SK-N-SH (cell line): ENCODE measurements at regions of chr12 and their contacts with region 1.

Region 1: GRCh38 chr12:26701604-26702215 is 131.3 kb downstream of the ITPR2 start:
- DNase-seq: peak; percentile 19
- H3K4me3 ChIP-seq: no peak overlapping the region; a peak in 1 of 4 replicates
- H3K27ac ChIP-seq: no peak overlapping the region
- H3K4me1 ChIP-seq: peaks cover 8 to 20% of the 10 kb centered on the region in 2 experiments; a peak in 3 of 4 replicates
- H3K27me3 ChIP-seq: no peaks in the 10 kb centered on the region
- CTCF ChIP-seq: peak; percentile 82
- EP300 ChIP-seq: no peak
- RAD21 ChIP-seq: peak; percentile 75

Region 2: GRCh38 chr12:26097046-26097878 is 604.4 kb before region 1 on chr12:
- CTCF ChIA-PET with region 1: interaction called, 10 read pairs
- POLR2A ChIA-PET with region 1: no interaction called
- DNase-seq: peak; percentile 75
- H3K4me3 ChIP-seq: peak overlapping the region in 1 of 2 experiments; percentile 20; a peak in 1 of 4 replicates
- H3K27ac ChIP-seq: no peak overlapping the region
- H3K4me1 ChIP-seq: no peaks in the 10 kb centered on the region; a peak in 1 of 4 replicates
- H3K27me3 ChIP-seq: no peaks in the 10 kb centered on the region
- CTCF ChIP-seq: peak; percentile 98
- EP300 ChIP-seq: no peak
- RAD21 ChIP-seq: peak; percentile 88

Region 3: GRCh38 chr12:26119391-26119981 is 582.2 kb before region 1 on chr12:
- CTCF ChIA-PET with region 1: interaction called, 24 read pairs
- POLR2A ChIA-PET with region 1: no interaction called
- DNase-seq: peak; percentile 56
- H3K4me3 ChIP-seq: no peak overlapping the region
- H3K27ac ChIP-seq: peak overlapping the region in 1 of 2 experiments; percentile 4; a peak in 1 of 4 replicates
- H3K4me1 ChIP-seq: peaks cover 4 to 15% of the 10 kb centered on the region in 2 experiments; a peak in 3 of 4 replicates
- H3K27me3 ChIP-seq: no peaks in the 10 kb centered on the region
- CTCF ChIP-seq: peak; percentile 76
- EP300 ChIP-seq: no peak
- RAD21 ChIP-seq: peak; percentile 80

Region 4: GRCh38 chr12:26126340-26127284 is 575.1 kb before region 1 on chr12:
- CTCF ChIA-PET with region 1: interaction called, 22 read pairs
- POLR2A ChIA-PET with region 1: no interaction called
- DNase-seq: peak; percentile 90
- H3K4me3 ChIP-seq: peak overlapping the region; percentile 65 to 83
- H3K27ac ChIP-seq: peak overlapping the region; percentile 69 to 96
- H3K4me1 ChIP-seq: peaks cover 5 to 21% of the 10 kb centered on the region in 2 experiments; a peak in 3 of 4 replicates
- H3K27me3 ChIP-seq: no peaks in the 10 kb centered on the region
- CTCF ChIP-seq: peak; percentile 22; the same call in 1 of the 2 replicates
- EP300 ChIP-seq: no peak
- RAD21 ChIP-seq: peak; percentile 33; the same call in 1 of the 2 replicates

Region 5: GRCh38 chr12:26195641-26196420 is 505.9 kb before region 1 on chr12:
- CTCF ChIA-PET with region 1: interaction called, 10 read pairs
- POLR2A ChIA-PET with region 1: no interaction called
- DNase-seq: peak; percentile 78
- H3K4me3 ChIP-seq: peak overlapping the region; percentile 56 to 57
- H3K27ac ChIP-seq: peak overlapping the region; percentile 66 to 73
- H3K4me1 ChIP-seq: peaks cover 9 to 25% of the 10 kb centered on the region in 2 experiments; a peak in 3 of 4 replicates
- H3K27me3 ChIP-seq: no peaks in the 10 kb centered on the region
- CTCF ChIP-seq: no peak
- EP300 ChIP-seq: no peak
- RAD21 ChIP-seq: no peak

Region 6: DNA sequence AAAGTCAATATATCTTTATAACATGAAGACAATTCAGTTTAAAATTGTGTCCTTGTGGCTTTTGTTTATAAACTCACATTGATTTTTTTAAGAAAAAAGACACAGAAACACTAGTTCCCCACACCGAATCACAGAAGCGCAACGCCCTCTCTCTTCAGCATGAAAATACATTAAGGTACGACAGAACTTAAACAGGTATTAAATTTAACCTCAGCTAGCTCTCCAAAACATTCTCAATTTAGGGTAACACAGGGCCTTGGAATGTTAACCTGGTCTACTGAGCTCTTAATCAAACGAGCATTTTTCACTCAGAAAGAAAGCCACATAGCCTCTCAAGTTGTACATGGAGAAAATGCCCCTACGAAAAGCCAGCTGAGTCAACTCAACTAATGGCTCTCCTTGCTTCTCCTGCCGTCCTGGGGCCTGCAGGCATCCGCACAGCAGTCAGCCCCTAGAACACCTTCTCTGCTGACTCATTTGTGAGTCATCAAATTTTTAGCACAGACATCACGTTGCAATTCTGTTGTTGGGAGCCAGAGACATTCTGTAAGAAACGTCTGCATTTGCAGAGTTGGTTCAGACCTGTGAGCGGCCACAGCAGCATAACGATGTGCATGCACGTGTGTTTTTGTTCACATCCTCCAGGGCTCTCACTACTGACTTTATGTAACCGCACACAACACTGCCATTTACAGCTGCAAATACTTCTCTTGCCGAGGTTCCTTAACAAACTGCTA is 10.3 kb before region 1 on chr12:
- CTCF ChIA-PET with region 1: interaction called, 22 read pairs
- POLR2A ChIA-PET with region 1: no interaction called
- DNase-seq: no peak
- H3K4me3 ChIP-seq: no peak overlapping the region
- H3K27ac ChIP-seq: peak overlapping the region; percentile 48 to 73
- H3K4me1 ChIP-seq: peaks cover 2 to 20% of the 10 kb centered on the region in 2 experiments; a peak in 2 of 4 replicates
- H3K27me3 ChIP-seq: no peaks in the 10 kb centered on the region
- CTCF ChIP-seq: no peak
- EP300 ChIP-seq: peak in 1 of 2 experiments; percentile 83; a peak in 1 of 4 replicates
- RAD21 ChIP-seq: no peak

Region 7: GRCh38 chr12:26719852-26720251 is 18.1 kb after region 1 on chr12:
- CTCF ChIA-PET with region 1: interaction called, 16 read pairs
- POLR2A ChIA-PET with region 1: no interaction called
- DNase-seq: no peak
- H3K4me3 ChIP-seq: no peak overlapping the region
- H3K27ac ChIP-seq: no peak overlapping the region
- H3K4me1 ChIP-seq: peaks cover 11 to 12% of the 10 kb centered on the region in 2 experiments
- H3K27me3 ChIP-seq: no peaks in the 10 kb centered on the region
- CTCF ChIP-seq: peak; percentile 32
- EP300 ChIP-seq: no peak
- RAD21 ChIP-seq: no peak

Region 8: DNA sequence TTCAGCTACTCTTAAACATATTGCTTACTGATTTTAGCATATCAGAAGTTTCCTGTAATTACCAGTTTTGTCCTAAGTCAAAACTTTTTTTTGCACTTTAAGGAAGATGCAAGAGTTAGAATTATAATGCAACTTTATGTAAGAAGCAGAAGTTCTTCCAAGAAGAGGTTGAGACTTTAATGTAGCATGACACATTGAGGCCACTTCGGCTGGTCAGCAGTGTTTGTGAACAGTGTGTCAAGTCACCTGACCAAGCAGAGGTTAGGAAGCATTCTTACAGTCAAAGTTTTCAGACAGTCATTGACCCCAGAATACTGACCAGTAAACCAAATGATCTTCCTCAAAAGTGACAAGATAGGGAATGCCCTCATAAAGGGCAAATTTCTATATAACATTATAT is 251.7 kb after region 1 on chr12:
- CTCF ChIA-PET with region 1: no interaction called
- POLR2A ChIA-PET with region 1: no interaction called
- DNase-seq: no peak
- H3K4me3 ChIP-seq: no peak overlapping the region
- H3K27ac ChIP-seq: no peak overlapping the region
- H3K4me1 ChIP-seq: no peaks in the 10 kb centered on the region
- H3K27me3 ChIP-seq: no peaks in the 10 kb centered on the region
- CTCF ChIP-seq: no peak
- EP300 ChIP-seq: no peak
- RAD21 ChIP-seq: no peak